ENCODE measurements at regions of chr11 and their contacts with region 1.

Region 1: DNA sequence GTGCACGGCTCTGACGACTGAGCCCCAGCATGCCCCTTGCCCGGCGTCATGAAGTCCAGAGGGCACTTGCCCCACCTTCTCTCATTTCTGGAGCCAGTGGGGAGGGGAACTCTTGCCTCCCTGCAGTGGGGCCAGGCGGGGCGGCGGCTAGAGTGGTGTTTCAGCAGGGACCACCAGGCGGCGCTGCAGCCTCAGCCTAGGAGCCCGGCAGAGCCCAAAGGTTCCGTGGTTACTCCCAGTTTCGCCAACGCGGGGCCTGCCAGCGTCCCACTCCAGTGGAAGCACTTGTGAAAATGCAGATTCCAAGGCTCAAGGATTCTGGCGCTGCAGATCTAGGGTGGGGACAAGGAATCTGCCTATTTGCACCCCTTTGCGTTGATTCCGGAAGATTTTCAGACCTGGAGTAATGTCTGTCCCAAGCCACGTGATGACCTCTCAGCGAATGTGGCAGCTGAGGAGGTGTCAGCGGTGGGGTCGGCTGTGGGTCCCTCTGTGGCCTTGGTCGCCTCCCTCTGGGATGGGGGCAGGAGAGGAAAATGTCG is 55.7 kb downstream of the CD82 start:
- DNase-seq: peak; percentile 74 to 91 (median 77)
- ATAC-seq: peak; percentile 65 to 79 (median 66)
- H3K4me3 ChIP-seq: peak overlapping the region in 8 of 12 donors; percentile 19 to 48 (median 34)
- H3K27ac ChIP-seq: no peak overlapping the region
- H3K4me1 ChIP-seq: peaks cover 3 to 48% (median 28%) of the 10 kb centered on the region in 12 donors
- H3K27me3 ChIP-seq: no peaks in the 10 kb centered on the region
- CTCF ChIP-seq: peak in 11 of 12 donors; percentile 94 to 99 (median 96)
- POLR2A ChIP-seq: no peak

Region 2: DNA sequence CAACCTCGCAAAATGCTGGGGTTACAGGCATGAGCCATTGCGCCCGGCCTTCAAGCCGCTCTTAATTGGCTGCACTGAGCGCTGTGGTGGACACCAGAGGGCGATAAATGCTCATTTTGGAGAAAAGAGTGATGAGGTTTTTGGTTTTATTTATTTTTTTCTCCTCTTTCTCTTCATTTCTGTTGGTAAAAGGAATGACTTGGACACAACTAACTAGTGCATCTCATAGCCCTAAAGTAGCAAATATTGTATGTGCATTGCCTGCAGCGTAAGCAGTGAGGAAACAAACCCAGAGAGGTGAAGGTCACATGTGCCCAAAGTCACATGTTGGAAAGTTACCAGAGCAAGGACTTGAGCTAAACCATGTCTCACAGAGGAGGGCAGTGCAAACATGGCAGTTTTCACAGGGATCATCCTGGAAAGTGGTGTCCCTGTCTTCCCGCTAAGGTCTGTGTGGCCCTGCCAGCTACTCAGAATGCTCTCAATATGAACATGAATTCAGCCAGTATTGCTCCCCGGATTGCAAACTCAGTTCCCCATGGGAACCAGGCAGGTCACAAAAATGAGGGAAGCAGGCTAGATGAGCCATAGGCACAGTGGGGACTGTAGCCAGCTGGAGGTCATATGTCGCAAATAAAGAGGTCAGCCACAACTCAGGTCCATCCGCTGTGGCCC is 64.3 kb before region 1 on chr11:
- intact Hi-C with region 1: loop called (anchors 1 kb)
- DNase-seq: peak in 4 of 5 donors; percentile 57 to 81 (median 66)
- ATAC-seq: peak; percentile 65 to 85 (median 78)
- H3K4me3 ChIP-seq: no peak overlapping the region
- H3K27ac ChIP-seq: peak overlapping the region in 1 of 12 donors; percentile 13
- H3K4me1 ChIP-seq: peaks cover 0 to 28% (median 5%) of the 10 kb centered on the region in 12 donors
- H3K27me3 ChIP-seq: no peaks in the 10 kb centered on the region
- CTCF ChIP-seq: peak; percentile 72 to 95 (median 82)
- POLR2A ChIP-seq: no peak

Region 3: DNA sequence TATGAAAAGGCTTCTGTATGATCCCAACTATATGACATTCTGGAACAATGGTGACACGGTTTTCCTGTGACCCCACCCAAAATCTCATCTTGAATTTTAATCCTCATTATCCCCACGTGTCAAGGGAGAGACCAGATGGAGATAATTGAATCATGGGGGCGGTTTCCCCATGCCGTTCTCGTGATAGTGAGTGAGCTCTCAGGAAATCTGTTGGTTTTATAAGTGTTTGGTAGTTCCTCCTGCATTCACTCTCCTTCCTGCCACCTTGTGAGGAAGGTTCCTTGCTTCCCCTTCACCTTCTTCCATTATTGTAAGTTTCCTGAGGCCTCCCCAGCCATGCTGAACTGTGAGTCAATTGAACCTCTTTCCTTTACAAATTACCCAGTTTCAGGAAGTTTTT is 52.5 kb after region 1 on chr11:
- intact Hi-C with region 1: no loop called
- DNase-seq: no peak
- ATAC-seq: no peak
- H3K4me3 ChIP-seq: no peak overlapping the region
- H3K27ac ChIP-seq: no peak overlapping the region
- H3K4me1 ChIP-seq: no peaks in the 10 kb centered on the region
- H3K27me3 ChIP-seq: no peaks in the 10 kb centered on the region
- CTCF ChIP-seq: no peak
- POLR2A ChIP-seq: no peak

Region 4: DNA sequence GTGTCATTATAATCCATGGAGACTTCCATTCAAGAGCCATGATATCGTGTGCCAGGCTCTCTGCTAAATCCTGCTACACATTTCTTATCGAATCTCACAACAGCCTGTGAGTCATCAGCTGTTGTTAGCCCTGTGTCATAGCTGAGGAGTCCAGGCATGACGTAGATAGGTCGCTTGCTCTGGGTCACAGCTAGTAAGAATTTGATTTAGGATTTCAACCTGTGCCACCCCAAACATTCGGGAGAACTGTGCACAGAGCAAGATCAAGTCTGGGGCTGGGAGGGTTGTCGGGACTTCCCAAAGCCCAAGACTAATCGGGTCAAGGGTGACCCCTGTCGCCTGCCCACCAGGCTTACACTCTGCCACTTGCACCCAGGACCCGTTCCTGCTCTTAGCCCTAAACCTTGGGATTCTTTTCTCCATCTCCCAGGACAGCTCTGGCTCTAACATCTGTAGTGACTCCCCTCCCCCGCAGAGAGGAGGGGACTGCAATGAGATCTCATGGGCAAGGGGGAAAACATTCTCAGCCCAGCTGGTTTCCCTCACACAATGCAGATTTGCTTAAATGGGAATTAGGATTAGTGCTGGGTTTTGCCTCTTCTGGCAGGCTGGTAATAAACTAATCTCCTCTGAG is 139.8 kb after region 1 on chr11:
- intact Hi-C with region 1: loop called in 1 of 10 experiments (anchors 10 kb)
- DNase-seq: peak in 4 of 5 donors; percentile 63 to 83 (median 69)
- ATAC-seq: peak; percentile 88 to 94 (median 90)
- H3K4me3 ChIP-seq: no peak overlapping the region
- H3K27ac ChIP-seq: peak overlapping the region; percentile 70 to 92 (median 90)
- H3K4me1 ChIP-seq: peaks cover 18 to 81% (median 60%) of the 10 kb centered on the region in 12 donors
- H3K27me3 ChIP-seq: no peaks in the 10 kb centered on the region
- CTCF ChIP-seq: peak in 6 of 12 donors; percentile 5 to 24 (median 16)
- POLR2A ChIP-seq: no peak

Region 5: DNA sequence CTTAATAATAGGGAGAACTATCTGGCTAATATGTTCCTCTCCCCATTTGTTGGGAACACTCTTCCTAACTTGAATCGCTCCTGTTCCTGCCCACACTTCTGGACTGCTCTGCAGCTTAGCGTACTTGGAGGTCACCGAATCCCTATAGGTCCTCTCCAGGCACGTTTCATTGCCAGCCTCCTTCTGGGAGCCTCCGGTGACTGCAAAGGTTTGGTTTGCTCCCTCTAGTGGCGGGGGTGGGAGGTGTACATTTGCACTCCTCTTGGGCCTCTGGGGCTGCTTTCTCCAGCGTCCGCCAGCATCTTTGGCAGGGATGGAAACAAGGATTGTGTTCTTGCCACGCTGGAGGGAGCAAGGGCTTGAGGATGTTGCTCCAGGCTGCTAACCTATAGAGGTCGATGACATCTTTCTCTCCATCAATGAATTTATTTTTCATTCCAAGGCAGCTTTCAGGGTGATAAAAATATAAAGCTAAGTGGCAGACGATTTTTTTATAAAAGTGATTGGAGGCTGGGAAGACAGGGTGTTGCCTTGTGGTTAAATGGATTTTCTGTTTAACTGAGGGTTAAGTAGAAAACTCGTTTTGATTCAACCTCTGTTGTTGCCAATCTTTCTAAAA is 154.3 kb after region 1 on chr11:
- intact Hi-C with region 1: loop called in 6 of 10 experiments (anchors 5 to 10 kb)
- DNase-seq: peak; percentile 50 to 75 (median 71)
- ATAC-seq: peak; percentile 21 to 53 (median 45)
- H3K4me3 ChIP-seq: no peak overlapping the region
- H3K27ac ChIP-seq: peak overlapping the region in 11 of 12 donors; percentile 29 to 92 (median 76)
- H3K4me1 ChIP-seq: peaks cover 7 to 91% (median 65%) of the 10 kb centered on the region in 12 donors
- H3K27me3 ChIP-seq: no peaks in the 10 kb centered on the region
- CTCF ChIP-seq: peak; percentile 56 to 77 (median 66)
- POLR2A ChIP-seq: no peak

Region 6: GRCh38 chr11:44785856-44786606 is 164.8 kb after region 1 on chr11:
- intact Hi-C with region 1: loop called in 2 of 10 experiments (anchors 10 kb)
- DNase-seq: no peak
- ATAC-seq: peak in 3 of 4 donors; percentile 26 to 42 (median 33)
- H3K4me3 ChIP-seq: no peak overlapping the region
- H3K27ac ChIP-seq: peak overlapping the region in 3 of 12 donors; percentile 15 to 17 (median 17)
- H3K4me1 ChIP-seq: peaks cover 7 to 76% (median 39%) of the 10 kb centered on the region in 12 donors
- H3K27me3 ChIP-seq: no peaks in the 10 kb centered on the region
- CTCF ChIP-seq: peak in 3 of 12 donors; percentile 12 to 32 (median 20)
- POLR2A ChIP-seq: no peak

Region 7: DNA sequence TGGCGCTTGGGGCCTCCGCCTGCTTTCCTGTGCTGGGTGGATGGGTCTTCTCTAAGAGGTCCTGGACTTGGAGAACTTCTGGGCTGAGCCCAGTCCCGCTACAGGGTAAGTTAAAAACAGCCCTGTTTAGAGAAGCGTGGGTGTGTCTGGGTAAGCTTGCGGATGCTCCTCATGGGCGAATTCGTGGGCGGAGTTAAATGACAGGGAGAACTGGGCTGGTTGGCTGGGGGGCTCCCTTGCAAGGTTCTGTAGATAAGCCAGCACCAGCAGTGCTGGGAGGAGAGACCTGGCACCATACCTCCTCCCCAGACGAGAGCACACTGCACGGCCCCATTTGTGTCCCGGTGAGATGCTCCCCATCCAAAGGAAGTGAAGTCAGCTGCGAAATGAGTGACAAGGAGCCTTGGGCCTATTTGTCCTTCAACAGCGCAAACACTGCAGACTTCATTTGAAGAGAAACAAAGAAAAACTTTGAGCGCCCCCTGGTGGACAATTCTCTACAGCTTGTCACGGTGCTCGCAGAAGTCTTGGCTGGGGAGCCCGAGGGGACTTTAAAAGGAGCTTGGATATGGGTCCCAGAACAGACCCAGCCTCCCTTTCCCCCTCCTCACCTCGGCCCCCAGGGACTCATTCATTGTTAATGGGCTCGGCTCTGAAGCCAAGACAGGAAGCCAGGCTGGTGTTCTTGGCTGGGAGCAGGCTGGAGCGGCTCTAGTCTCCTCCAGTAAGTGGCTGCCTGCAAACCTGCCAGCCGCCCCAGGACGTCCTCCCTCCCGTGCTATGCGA is 290.0 kb after region 1 on chr11:
- intact Hi-C with region 1: loop called (anchors 1 to 2 kb)
- DNase-seq: peak; percentile 81 to 91 (median 89)
- ATAC-seq: peak; percentile 67 to 82 (median 71)
- H3K4me3 ChIP-seq: peak overlapping the region in 3 of 12 donors; percentile 8 to 29 (median 8)
- H3K27ac ChIP-seq: peak overlapping the region in 7 of 12 donors; percentile 6 to 58 (median 31)
- H3K4me1 ChIP-seq: peaks cover 0 to 47% (median 26%) of the 10 kb centered on the region in 12 donors
- H3K27me3 ChIP-seq: no peaks in the 10 kb centered on the region
- CTCF ChIP-seq: peak; percentile 84 to 96 (median 90)
- POLR2A ChIP-seq: no peak

Region 8: DNA sequence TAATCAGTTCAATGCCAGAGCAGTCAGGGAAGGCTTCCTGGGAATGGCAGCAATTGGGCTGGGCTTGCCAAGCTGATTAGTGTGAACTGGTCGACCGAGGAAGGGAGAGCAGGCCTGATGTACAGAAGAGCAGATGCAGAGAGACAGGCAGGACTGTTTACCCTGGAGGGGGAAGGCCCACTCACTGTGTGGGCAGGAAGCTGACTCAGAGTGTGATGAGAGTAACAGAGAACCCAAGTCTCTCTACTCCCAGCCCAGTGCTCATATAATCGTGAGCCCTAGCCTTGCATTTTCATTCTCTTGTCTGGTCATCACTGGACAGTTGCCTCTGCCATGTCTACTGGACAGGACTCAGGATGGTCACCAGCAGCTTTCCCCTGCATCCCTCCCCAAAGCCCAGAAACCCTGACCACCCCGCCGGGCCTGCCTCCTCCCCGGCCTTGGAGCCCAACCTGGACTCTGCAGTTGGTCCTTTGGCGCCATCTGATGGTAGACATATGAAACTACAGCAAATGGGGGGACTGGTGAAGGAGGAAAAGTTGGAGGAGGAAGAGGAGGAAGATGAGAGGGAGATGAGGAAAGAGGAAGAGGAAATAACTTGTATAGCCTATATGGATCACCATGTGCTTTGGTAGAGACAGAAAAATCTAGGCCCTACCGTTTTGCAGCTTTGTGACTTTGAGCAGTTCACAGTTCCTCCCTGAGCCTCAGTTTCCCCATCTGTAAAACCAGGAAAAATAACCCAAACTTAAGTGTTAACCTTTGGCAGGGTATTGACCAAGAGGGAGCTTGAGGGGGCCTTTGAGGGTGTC is 481.8 kb after region 1 on chr11:
- intact Hi-C with region 1: loop called in 7 of 10 experiments (anchors 2 to 10 kb)
- DNase-seq: peak; percentile 58 to 81 (median 62)
- ATAC-seq: peak in 3 of 4 donors; percentile 62 to 81 (median 67)
- H3K4me3 ChIP-seq: no peak overlapping the region
- H3K27ac ChIP-seq: peak overlapping the region in 1 of 12 donors; percentile 66
- H3K4me1 ChIP-seq: peaks cover 0 to 25% (median 10%) of the 10 kb centered on the region in 12 donors
- H3K27me3 ChIP-seq: peaks cover 0 to 9% (median 0%) of the 10 kb centered on the region in 9 donors
- CTCF ChIP-seq: peak; percentile 85 to 99 (median 96)
- POLR2A ChIP-seq: no peak

Measured in heart left ventricle (tissue), 16 donors.